Gastrocnemius medialis (tissue), 4 donors: ENCODE measurements at regions of chr12 and their contacts with region 1.

Region 1: DNA sequence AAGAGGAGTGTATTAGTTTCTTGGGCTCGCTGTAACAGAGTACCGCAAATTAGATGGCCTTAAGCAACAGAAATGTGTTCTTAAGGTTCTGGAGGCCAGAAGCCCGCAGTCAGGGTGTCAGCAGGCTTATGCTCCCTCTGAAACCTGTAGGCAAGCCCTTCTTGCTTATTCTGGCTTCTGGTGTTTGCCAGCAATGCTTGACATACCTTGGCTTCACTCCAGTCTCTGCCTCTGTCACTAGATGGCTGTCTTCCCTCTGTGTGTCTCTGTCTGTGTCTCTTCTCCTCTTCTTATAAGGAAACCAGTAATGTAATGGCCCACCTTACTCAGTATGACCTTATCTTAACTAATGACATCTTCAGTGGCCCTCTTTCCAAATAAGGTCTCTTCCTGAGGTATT is 85.1 kb downstream of the DERA start:
- DNase-seq: peak in 1 of 2 donors; percentile 38
- ATAC-seq: peak in 1 of 2 donors; percentile 85
- H3K4me3 ChIP-seq: no peak overlapping the region
- H3K27ac ChIP-seq: no peak overlapping the region
- H3K4me1 ChIP-seq: peaks cover 0 to 8% of the 10 kb centered on the region in 2 donors
- H3K27me3 ChIP-seq: no peaks in the 10 kb centered on the region
- CTCF ChIP-seq: no peak
- POLR2A ChIP-seq: no peak

Region 2: GRCh38 chr12:17642340-17642650 is 1646.0 kb after region 1 on chr12:
- in situ Hi-C with region 1: no loop called
- intact Hi-C with region 1: loop called (anchors 5 kb)
- DNase-seq: no peak
- ATAC-seq: no peak
- H3K4me3 ChIP-seq: peak overlapping the region in 1 of 4 donors; percentile 34
- H3K27ac ChIP-seq: no peak overlapping the region
- H3K4me1 ChIP-seq: no peaks in the 10 kb centered on the region
- H3K27me3 ChIP-seq: no peaks in the 10 kb centered on the region
- CTCF ChIP-seq: peak in 1 of 5 experiments; percentile 21
- POLR2A ChIP-seq: no peak